ENCODE measurements at regions of chr10 and their contacts with region 1.

Region 1: GRCh38 chr10:48976196-48976595 is 36.6 kb upstream of the LRRC18 start:
- DNase-seq: peak in 1 of 5 donors; percentile 17
- H3K4me3 ChIP-seq: no peak overlapping the region
- H3K27ac ChIP-seq: no peak overlapping the region
- H3K4me1 ChIP-seq: peaks cover under 1% of the 10 kb centered on the region
- H3K27me3 ChIP-seq: no peaks in the 10 kb centered on the region
- CTCF ChIP-seq: no peak
- EP300 ChIP-seq: no peak
- POLR2A ChIP-seq: no peak

Region 2: DNA sequence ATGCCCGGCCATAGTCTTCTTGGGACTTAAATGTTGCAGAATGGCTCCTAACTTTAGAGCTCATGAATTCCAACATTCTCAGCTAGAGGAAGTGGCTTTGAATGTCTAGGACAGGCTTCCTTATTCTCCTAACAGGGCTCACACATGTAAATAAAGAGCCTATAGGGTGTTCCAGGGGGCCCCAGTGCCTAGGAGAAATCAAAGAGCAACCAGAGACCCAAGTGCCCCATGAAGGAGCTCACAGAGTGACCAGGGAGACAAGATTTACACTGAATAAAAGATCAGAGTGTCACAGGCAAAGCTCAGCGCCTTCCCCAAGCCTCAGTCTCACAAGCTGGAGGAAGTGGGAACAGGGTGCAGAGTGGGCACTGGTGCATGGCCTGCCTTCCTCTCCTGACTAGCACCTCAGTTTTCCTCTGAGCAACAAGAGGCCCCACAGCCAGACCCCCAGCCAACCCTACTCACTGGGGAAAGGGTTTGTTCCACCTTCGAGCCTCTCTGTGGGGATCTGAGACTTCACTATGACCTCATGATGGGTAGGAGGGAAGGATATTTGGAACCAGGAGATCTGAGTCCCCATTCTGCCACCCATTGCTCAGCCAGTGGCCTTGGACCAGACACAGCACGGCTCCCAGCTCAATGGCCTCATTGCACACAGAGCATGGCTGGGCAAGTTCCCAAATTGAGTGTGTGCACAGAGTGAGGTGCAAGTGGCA is 196.0 kb after region 1 on chr10:
- intact Hi-C with region 1: loop called in 1 of 4 experiments (anchors 5 kb)
- DNase-seq: no peak
- H3K4me3 ChIP-seq: no peak overlapping the region
- H3K27ac ChIP-seq: no peak overlapping the region
- H3K4me1 ChIP-seq: no peaks in the 10 kb centered on the region
- H3K27me3 ChIP-seq: no peaks in the 10 kb centered on the region
- CTCF ChIP-seq: no peak
- EP300 ChIP-seq: no peak
- POLR2A ChIP-seq: no peak

Region 3: DNA sequence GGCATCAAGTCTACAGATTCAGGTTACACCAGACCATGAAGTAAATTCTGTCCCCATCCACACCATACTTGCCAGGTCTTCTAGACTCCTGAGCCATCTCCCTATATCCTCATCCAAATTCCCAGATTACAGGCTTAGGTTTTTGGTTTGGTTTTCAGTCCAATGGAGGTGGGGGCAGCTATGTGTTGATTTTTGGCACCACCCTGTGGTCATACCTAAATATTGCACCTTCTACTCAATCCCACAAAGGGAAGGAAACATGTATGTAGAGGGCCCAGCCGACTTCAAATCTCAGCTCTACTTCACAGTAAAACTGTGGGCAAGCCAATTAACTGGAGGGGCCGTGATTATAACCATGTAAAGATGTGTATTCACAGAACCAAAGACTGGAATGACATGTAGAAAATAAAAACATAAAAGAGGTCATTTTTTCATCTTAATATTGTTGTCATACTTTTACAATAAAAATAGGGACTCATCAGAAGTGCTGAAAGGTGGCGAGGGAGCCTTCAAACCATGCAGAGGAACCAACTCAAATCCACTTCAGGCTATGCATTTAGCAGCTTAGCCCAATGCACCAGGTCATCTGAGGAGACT is 542.9 kb after region 1 on chr10:
- intact Hi-C with region 1: loop called in 2 of 4 experiments (anchors 10 kb)
- DNase-seq: peak in 1 of 5 donors; percentile 25
- H3K4me3 ChIP-seq: no peak overlapping the region
- H3K27ac ChIP-seq: no peak overlapping the region
- H3K4me1 ChIP-seq: no peaks in the 10 kb centered on the region
- H3K27me3 ChIP-seq: no peaks in the 10 kb centered on the region
- CTCF ChIP-seq: peak in 1 of 3 donors; percentile 35
- EP300 ChIP-seq: no peak
- POLR2A ChIP-seq: no peak